Naive thymus-derived CD8-positive, alpha-beta T cell (primary cell): ENCODE measurements at regions of chr2 and their contacts with region 1.

Region 1: GRCh38 chr2:43169987-43170386 is 56.4 kb downstream of the ZFP36L2 start:
- DNase-seq: peak in 8 of 10 donors; percentile 47 to 77 (median 69)
- ATAC-seq: peak; percentile 8 to 19
- H3K4me3 Mint-ChIP-seq: peak overlapping the region; percentile 65 to 95 (median 88)
- H3K27ac Mint-ChIP-seq: peak overlapping the region; percentile 94 to 100 (median 97)
- H3K4me1 Mint-ChIP-seq: peaks cover 42 to 86% (median 77%) of the 10 kb centered on the region in 4 donors
- H3K27me3 Mint-ChIP-seq: no peaks in the 10 kb centered on the region

Region 2: GRCh38 chr2:43158259-43158880 is 11.6 kb before region 1 on chr2:
- POLR2A ChIA-PET with region 1: interaction called, 46 read pairs
- DNase-seq: peak in 3 of 10 donors; percentile 46 to 72 (median 56)
- ATAC-seq: peak; percentile 43 to 60
- H3K4me3 Mint-ChIP-seq: peak overlapping the region; percentile 76 to 89 (median 82)
- H3K27ac Mint-ChIP-seq: peak overlapping the region; percentile 94 to 100 (median 98)
- H3K4me1 Mint-ChIP-seq: peaks cover 45 to 93% (median 89%) of the 10 kb centered on the region in 4 donors
- H3K27me3 Mint-ChIP-seq: no peaks in the 10 kb centered on the region

Region 3: DNA sequence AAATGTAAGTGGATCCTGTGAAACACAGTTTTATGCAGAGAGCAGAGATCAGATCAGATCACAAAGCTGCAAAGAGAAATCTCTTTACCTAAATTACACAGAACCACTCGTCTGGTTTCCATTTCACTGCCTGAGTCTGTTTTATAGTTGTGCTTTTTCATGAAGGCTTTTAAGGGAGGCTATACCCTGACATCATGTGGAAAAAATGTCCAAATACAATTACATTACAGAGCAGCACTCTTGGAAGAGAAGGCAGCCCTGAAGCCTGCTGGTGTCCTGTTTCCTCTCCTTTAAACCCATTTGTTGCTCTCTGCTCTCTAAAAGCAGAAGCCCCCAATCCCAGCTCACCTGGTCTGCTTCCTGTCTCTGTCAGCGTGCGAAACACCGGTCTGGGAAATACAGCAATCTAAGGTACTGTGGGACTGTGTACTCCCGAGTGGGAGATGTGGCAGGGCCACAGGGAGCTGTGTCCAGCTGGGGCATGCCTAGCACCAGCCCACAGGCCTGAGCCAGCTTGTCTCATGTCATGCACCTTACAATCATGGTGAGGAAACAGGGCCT is 81.3 kb after region 1 on chr2:
- POLR2A ChIA-PET with region 1: no interaction called
- DNase-seq: no peak
- ATAC-seq: no peak
- H3K4me3 Mint-ChIP-seq: no peak overlapping the region
- H3K27ac Mint-ChIP-seq: peak overlapping the region in 1 of 10 donors; percentile 36
- H3K4me1 Mint-ChIP-seq: peaks cover 0 to 4% (median under 1%) of the 10 kb centered on the region in 4 donors
- H3K27me3 Mint-ChIP-seq: no peaks in the 10 kb centered on the region

Region 4: GRCh38 chr2:43318791-43319190 is 148.8 kb after region 1 on chr2:
- POLR2A ChIA-PET with region 1: no interaction called
- DNase-seq: no peak
- ATAC-seq: no peak
- H3K4me3 Mint-ChIP-seq: no peak overlapping the region
- H3K27ac Mint-ChIP-seq: no peak overlapping the region
- H3K4me1 Mint-ChIP-seq: peaks cover 6 to 10% (median 7%) of the 10 kb centered on the region in 4 donors
- H3K27me3 Mint-ChIP-seq: no peaks in the 10 kb centered on the region